Ascending aorta (tissue), 2 donors: ENCODE measurements at regions of chrX and their contacts with region 1.

Region 1: GRCh38 chrX:136065044-136065671 is 79.9 kb downstream of the SLC9A6 start:
- DNase-seq: no peak
- H3K4me3 ChIP-seq: no peak overlapping the region
- H3K27ac ChIP-seq: peak overlapping the region; percentile 82 to 88
- H3K4me1 ChIP-seq: peaks cover 2 to 16% of the 10 kb centered on the region in 2 donors
- H3K27me3 ChIP-seq: no peaks in the 10 kb centered on the region
- CTCF ChIP-seq: no peak

Region 2: DNA sequence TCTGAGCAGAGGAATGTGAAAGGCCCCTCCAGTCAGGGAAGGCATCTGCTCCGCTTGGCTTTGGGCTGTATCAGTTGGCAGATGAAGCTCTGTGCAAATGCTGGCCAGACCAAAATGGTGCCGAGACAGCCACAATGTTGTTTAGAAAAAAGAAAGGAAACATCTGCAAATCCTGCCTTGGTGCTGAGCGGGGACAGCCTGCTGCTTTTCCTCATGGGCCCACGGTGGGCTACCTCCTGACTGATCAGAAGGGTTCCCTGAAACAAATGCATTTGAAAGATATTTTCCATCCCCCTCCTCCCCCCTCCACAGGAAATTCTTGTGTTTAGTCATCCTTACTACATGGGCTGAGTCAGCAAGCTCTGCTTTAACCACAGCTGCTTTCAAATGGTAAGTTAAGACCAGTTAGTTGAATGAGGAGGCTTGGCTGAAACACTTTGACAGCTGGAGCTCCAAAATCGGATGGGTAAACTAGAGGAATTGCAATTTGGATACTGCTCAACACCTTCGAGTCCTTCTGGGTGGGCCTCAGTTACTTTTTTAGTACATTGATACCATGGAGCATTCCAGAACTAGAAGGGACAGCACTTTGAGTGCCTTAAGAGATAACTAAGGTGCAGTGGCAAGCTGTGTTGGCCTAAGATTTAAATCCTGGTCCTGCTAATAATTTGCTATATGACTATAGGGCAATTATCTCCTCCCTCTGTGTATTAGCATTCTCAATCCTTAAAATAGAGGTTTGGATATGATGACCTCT is 1442.9 kb before region 1 on chrX:
- intact Hi-C with region 1: no loop called
- DNase-seq: no peak
- H3K4me3 ChIP-seq: no peak overlapping the region
- H3K27ac ChIP-seq: no peak overlapping the region
- H3K4me1 ChIP-seq: peaks cover 0 to 3% of the 10 kb centered on the region in 2 donors
- H3K27me3 ChIP-seq: no peaks in the 10 kb centered on the region
- CTCF ChIP-seq: no peak

Region 3: GRCh38 chrX:136021160-136021559 is 44.0 kb before region 1 on chrX:
- intact Hi-C with region 1: no loop called
- DNase-seq: no peak
- H3K4me3 ChIP-seq: no peak overlapping the region
- H3K27ac ChIP-seq: no peak overlapping the region
- H3K4me1 ChIP-seq: no peaks in the 10 kb centered on the region
- H3K27me3 ChIP-seq: no peaks in the 10 kb centered on the region
- CTCF ChIP-seq: no peak

Region 4: DNA sequence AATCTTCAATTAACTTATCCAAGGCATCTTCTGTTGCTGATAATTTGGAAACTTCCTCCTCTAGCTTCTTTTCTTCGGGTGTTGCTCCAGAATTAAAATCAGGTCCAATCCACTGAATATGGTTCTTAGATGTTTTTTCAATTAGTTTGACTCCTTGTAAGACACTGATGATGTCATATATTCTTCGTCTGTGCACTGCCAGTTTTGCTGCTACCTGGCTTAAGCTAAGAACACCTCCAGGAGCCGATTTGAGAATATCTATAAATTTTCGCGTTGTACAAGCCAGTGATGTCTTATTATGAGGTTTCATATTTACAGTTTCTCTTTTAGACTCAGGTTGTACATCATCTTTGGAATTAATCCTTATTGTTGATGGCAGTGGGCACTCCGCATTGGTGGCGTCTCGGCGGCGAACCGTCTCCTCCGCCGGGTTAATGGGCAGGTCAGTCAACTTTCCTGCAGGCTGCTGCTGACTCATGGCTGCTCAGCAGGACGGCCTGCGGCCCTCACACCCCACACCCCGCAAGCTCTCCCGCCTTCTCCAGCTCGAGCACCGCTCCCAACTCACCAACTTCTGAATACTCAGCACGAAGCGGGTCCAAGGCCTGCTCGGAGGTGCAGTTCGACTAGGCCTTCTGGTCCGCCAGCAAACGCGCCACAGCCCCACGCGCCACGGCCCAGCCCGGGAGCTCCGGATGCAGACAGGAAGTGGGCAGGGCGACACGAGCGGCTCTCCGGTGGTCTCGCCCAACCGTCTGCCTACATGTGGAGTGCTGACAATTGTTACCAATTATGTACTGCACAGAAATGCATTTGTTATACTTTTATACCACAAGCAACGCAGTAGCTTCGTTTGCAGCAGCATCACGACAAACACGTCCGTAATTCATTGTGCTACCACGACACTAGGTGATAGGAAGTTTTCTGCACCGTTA is 33.0 kb after region 1 on chrX:
- intact Hi-C with region 1: no loop called
- DNase-seq: no peak
- H3K4me3 ChIP-seq: no peak overlapping the region
- H3K27ac ChIP-seq: no peak overlapping the region
- H3K4me1 ChIP-seq: no peaks in the 10 kb centered on the region
- H3K27me3 ChIP-seq: no peaks in the 10 kb centered on the region
- CTCF ChIP-seq: no peak

Region 5: GRCh38 chrX:136115126-136115903 is 50.2 kb after region 1 on chrX:
- intact Hi-C with region 1: loop called (anchors 2 kb)
- DNase-seq: no peak
- H3K4me3 ChIP-seq: no peak overlapping the region
- H3K27ac ChIP-seq: peak overlapping the region; percentile 33 to 65
- H3K4me1 ChIP-seq: peaks cover 0 to 9% of the 10 kb centered on the region in 2 donors
- H3K27me3 ChIP-seq: no peaks in the 10 kb centered on the region
- CTCF ChIP-seq: no peak

Region 6: DNA sequence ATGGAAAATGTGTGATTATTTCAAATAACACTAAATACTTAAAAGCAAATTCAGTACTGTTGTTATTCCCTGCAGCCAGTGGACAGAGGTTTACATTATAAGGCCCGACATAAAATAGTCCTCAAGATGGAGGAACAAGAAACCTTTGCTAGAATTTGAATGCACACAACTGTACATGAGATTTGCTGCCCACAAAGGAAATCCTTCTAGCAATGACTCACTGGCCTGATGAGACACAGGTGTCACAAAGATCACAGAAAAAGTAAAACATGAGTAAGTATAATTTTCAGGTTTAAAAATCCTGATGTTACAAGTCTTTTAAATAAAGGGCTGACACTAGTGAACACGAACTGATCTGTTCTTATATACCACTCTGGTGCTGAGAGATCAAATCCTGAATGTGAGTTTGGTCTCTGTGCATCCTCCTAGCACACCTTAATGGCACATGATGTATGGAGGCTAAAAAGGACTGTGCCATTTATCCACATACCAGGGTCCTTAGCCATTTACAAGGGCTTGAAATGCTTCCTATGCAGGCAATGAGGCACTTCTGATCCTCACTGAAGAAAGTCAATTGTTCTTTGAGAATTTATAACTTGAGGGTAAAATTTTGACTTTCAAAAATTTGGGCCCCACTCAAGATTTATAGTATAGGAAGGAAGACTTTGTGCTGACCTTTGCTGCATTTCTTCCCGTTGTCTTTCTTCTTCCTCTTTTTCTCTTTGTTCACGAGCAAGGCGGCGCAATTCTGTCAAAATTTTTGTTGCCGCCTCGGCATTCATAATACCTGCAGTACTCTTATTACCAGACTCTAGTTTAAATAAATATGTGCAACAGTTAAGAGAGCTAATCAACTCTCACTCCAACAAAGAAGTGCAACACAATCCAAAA is 163.0 kb after region 1 on chrX:
- intact Hi-C with region 1: no loop called
- DNase-seq: no peak
- H3K4me3 ChIP-seq: no peak overlapping the region
- H3K27ac ChIP-seq: no peak overlapping the region
- H3K4me1 ChIP-seq: no peaks in the 10 kb centered on the region
- H3K27me3 ChIP-seq: no peaks in the 10 kb centered on the region
- CTCF ChIP-seq: no peak